ENCODE measurements at regions of chr11 and their contacts with region 1.

Region 1: DNA sequence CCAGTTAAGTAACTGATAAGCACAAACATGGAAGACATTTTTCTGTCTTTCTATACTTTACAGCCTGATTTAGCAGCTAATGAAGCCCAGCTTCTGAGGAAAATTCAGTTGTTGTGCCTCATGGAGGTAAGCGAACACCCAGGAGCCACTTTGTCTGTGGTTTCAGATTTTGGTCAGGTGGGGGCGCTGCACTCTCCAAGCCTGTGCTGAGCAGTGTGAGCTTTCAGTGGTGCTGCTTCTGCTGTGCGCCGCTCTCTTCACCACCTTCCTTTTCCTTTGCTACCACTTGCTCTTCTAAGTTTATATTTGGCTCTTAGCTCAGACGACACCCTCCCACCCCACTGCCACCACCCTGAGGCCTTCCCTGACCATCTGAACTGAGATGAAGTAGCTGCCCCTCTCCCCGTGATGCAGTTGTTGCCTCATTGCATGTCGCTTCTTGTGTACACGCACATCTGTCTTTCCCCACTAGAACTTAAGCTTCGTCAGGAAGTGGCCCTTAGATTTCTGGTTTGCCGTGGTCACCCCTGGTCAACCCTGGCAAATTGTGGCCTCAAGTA is 14.0 kb downstream of the PSMD13 start:
- DNase-seq: no peak
- H3K4me3 ChIP-seq: no peak overlapping the region
- H3K27ac ChIP-seq: no peak overlapping the region
- H3K27me3 ChIP-seq: no peaks in the 10 kb centered on the region
- CTCF ChIP-seq: peak; percentile 62

Region 2: GRCh38 chr11:196786-197719 is 53.8 kb before region 1 on chr11:
- CTCF ChIA-PET with region 1: no interaction called
- POLR2A ChIA-PET with region 1: no interaction called
- DNase-seq: no peak
- H3K4me3 ChIP-seq: no peak overlapping the region
- H3K27ac ChIP-seq: no peak overlapping the region
- H3K27me3 ChIP-seq: no peaks in the 10 kb centered on the region
- CTCF ChIP-seq: no peak

Region 3: DNA sequence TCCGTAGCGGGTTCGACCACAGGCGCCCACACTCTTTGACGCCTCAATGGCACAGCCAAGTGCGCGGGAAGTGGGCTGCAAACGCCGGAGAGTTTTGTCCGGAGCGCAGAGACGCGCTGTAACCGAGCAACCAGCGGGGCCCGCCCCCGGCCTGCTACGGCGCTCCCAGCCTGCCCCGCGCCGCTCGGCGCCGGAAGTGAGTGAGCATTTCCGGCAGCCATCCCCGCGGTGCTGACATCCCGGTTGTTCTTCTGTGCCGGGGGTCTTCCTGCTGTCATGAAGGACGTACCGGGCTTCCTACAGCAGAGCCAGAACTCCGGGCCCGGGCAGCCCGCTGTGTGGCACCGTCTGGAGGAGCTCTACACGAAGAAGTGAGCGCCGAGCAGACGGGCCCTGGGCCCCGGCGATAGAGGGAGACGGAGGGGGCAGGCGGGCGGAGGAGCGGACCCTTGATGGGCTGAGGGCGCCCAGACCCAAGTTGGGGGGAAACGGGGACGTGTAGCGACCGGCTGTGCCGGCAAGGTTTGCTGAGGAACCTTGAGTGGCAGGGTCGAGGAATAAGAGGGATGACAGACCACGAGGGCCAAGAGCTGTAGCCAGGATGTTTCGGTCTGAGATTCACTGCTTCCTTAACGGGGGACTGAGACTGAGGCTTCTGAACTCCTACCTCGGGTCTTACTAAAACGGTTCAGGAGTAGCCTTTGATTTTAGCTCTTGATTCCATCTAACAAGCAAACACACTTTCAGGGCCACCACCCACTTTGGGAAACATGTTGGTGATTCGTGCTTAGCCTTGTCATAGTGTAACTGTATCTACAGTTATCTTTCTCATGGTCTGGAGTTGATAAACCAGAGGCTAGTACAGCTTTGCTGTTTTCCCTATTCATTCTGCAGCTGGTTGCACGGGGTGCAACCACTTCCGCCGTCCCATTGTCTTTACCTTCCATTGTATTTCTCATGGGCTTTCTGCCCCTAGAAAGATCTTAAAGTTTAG is 13.7 kb before region 1 on chr11 and contains the start of gene PSMD13:
- CTCF ChIA-PET with region 1: interaction called, 51 read pairs
- POLR2A ChIA-PET with region 1: no interaction called
- DNase-seq: peak; percentile 44
- H3K4me3 ChIP-seq: peak within 1 kb of the TSS; percentile 96
- H3K27ac ChIP-seq: peak within 1 kb of the TSS; percentile 74
- H3K27me3 ChIP-seq: no peaks in the 10 kb centered on the region
- CTCF ChIP-seq: no peak
- polyA plus RNA-seq, gene PSMD13: 138 and 148 TPM in 2 replicates

Region 4: DNA sequence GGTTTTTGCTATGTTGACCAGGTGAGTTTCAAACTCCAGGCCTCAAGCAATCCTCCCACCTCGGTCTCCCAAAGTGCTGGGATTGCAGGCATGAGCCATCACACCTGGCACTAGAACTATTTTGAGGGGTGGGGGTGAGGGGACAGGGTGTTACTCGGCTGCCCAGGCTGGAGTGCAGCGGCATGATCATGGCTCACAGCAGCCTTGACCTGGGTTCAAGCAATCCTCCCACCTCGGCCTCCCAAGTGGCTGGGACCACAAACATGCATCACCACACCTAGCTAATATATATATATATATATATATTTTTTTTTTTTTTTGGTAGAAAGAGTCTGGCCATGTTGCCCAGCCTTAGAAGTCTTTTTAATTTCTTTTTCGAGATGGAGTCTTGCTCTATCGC is 86.9 kb after region 1 on chr11:
- CTCF ChIA-PET with region 1: interaction called, 11 read pairs
- POLR2A ChIA-PET with region 1: no interaction called
- DNase-seq: no peak
- H3K4me3 ChIP-seq: no peak overlapping the region
- H3K27ac ChIP-seq: no peak overlapping the region
- H3K27me3 ChIP-seq: no peaks in the 10 kb centered on the region
- CTCF ChIP-seq: no peak

Region 5: GRCh38 chr11:363948-364761 is 113.3 kb after region 1 on chr11:
- CTCF ChIA-PET with region 1: interaction called, 20 read pairs
- POLR2A ChIA-PET with region 1: no interaction called
- DNase-seq: no peak
- H3K4me3 ChIP-seq: no peak overlapping the region
- H3K27ac ChIP-seq: no peak overlapping the region
- H3K27me3 ChIP-seq: peaks cover 15% of the 10 kb centered on the region
- CTCF ChIP-seq: no peak

Measured in AG04450 (cell line).